GM12878 (cell line): ENCODE measurements at regions of chr6 and their contacts with region 1.

Region 1: GRCh38 chr6:46090115-46091079 is 39.4 kb upstream of the ENPP4 start:
- DNase-seq: peak; percentile 17
- ATAC-seq: peak; percentile 84
- H3K4me3 ChIP-seq: no peak overlapping the region
- H3K27ac ChIP-seq: no peak overlapping the region
- H3K4me1 ChIP-seq: no peaks in the 10 kb centered on the region
- H3K27me3 ChIP-seq: no peaks in the 10 kb centered on the region
- CTCF ChIP-seq: peak; percentile 63 to 85 (median 68); a peak in 5 of 6 replicates
- EP300 ChIP-seq: no peak
- POLR2A ChIP-seq: no peak
- RAD21 ChIP-seq: peak; percentile 97

Region 2: DNA sequence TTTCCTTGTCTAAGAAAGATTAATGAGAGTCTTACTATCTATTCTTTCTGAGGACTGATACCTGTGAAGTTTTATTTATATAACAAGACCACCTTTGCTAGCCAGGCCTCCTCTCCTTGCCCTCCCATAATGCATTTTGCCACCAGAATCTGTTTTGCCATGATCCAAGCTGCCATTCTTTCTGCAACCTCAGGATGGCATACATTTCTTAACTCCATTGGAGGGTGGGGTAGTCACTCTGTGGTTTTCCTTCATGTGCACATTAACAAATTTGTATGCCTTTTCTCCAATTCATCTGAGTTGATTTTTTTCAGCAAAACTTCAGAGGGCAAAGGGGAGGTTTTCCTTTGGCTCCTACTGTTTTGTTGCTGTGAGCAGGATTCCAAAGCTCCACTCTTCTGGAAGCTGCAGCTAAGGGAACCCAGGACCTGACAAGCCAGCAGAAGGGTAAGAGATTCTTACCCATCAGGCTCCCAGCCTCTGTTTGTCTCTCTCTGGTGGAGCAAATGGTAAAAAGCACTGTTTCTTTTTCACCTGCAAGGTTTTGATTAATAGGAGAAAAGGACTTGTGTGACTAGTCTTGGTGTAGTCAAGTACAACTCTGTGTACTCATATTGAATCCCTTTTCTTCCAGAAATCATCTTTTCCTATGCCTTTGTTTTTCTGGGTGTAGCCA is 13.2 kb after region 1 on chr6:
- CTCF ChIA-PET with region 1: interaction called, 10 read pairs
- POLR2A ChIA-PET with region 1: no interaction called
- RAD21 ChIA-PET with region 1: interaction called, 7 read pairs
- SMC1A ChIA-PET with region 1: interaction called, 8 read pairs
- in situ Hi-C with region 1: no loop called
- intact Hi-C with region 1: no loop called
- DNase-seq: no peak
- ATAC-seq: no peak
- H3K4me3 ChIP-seq: no peak overlapping the region
- H3K27ac ChIP-seq: peak overlapping the region; percentile 26; the same call in 1 of the 2 replicates
- H3K4me1 ChIP-seq: peaks cover 15% of the 10 kb centered on the region; the same call in 1 of the 2 replicates
- H3K27me3 ChIP-seq: no peaks in the 10 kb centered on the region
- CTCF ChIP-seq: peak in 1 of 3 experiments; percentile 11; a peak in 1 of 6 replicates
- EP300 ChIP-seq: no peak
- POLR2A ChIP-seq: no peak
- RAD21 ChIP-seq: 0 out of 2 replicates have a peak, but pooled peaks have one; percentile 15

Region 3: DNA sequence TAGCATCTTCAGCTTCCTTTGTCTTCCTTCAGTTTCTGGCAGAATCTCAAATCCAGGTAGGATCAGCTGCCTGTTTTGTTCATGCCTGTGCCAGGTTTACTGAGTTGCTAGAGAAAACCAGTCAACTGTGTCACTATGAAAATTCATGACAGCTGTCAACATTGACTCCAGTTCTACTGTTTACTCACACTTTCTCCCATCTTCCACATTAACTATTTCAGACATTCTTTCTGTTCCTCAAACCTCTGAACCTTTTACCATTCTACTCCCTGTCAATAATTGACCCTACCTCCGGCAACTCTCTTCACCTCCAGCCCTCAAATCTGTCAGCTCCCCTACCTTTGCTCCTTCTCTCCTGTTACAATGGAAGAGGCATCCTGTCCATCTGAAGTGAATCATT is 47.9 kb after region 1 on chr6:
- CTCF ChIA-PET with region 1: interaction called, 7 read pairs
- POLR2A ChIA-PET with region 1: no interaction called
- RAD21 ChIA-PET with region 1: interaction called, 5 read pairs
- SMC1A ChIA-PET with region 1: interaction called, 11 read pairs
- in situ Hi-C with region 1: no loop called
- intact Hi-C with region 1: no loop called
- DNase-seq: no peak
- ATAC-seq: peak; percentile 72
- H3K4me3 ChIP-seq: 0 out of 2 replicates have a peak overlapping the region, but pooled peaks have one; percentile 14
- H3K27ac ChIP-seq: no peak overlapping the region
- H3K4me1 ChIP-seq: peaks cover 14% of the 10 kb centered on the region
- H3K27me3 ChIP-seq: no peaks in the 10 kb centered on the region
- CTCF ChIP-seq: no peak
- EP300 ChIP-seq: no peak
- POLR2A ChIP-seq: no peak
- RAD21 ChIP-seq: no peak

Region 4: GRCh38 chr6:46626228-46626909 is 536.0 kb after region 1 on chr6:
- CTCF ChIA-PET with region 1: interaction called, 9 read pairs
- POLR2A ChIA-PET with region 1: no interaction called
- RAD21 ChIA-PET with region 1: interaction called, 4 read pairs
- SMC1A ChIA-PET with region 1: interaction called, 6 read pairs
- in situ Hi-C with region 1: loop called (anchors 25 kb)
- intact Hi-C with region 1: loop called (anchors 1 kb)
- DNase-seq: peak; percentile 7
- ATAC-seq: peak; percentile 88
- H3K4me3 ChIP-seq: no peak overlapping the region
- H3K27ac ChIP-seq: no peak overlapping the region
- H3K4me1 ChIP-seq: no peaks in the 10 kb centered on the region
- H3K27me3 ChIP-seq: peaks cover 0 to 2% of the 10 kb centered on the region in 2 experiments; a peak in 1 of 4 replicates
- CTCF ChIP-seq: peak; percentile 40 to 60 (median 57); a peak in 4 of 6 replicates
- EP300 ChIP-seq: no peak
- POLR2A ChIP-seq: no peak
- RAD21 ChIP-seq: peak; percentile 72